GM10248 (cell line): ENCODE measurements at regions of chr12 and their contacts with region 1.

Region 1: DNA sequence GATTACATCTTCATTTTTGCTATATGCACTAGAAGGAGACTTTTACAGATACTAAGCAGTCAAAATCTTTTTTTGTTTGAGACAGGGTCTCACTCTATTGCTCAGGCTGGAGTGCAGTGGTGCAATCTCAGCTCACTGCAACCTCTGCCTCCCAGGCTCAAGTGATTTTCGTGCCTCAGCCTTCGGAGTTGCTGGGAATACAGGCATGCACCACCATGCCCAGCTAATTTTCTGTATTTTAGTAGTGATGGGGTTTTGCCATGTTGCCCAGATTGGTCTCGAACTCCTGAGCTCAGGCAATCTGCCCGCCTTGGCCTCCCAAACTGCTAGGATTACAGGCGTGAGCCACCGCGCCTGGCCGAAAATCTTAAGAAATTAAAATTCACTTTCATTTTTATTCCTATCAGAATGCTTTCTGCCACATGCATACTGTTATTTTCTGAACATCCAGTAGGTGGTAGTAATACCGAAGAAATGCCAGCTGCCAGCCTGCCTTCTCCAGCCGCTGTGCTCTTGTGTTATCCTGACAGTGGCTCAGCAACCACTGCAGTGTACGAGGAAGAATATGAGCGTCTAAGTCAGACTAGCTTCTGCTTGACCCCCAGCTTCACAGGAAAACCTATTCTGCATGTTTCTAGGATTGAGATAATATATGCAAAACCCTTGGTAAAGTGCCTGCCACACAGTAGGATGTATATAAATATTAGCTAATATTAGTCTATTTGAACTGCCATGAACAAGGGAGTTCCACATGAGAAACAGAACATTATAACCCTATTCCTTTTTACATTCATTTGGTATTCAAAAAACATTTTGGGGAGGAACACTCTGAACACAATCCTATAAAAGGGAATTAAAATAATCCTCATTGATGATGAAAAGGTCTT is 54.2 kb downstream of the RPAP3 start:
- DNase-seq: peak; percentile 34
- CTCF ChIP-seq: peak; percentile 56

Region 2: GRCh38 chr12:47636908-47637780 is 14.5 kb before region 1 on chr12:
- CTCF ChIA-PET with region 1: interaction called, 23 read pairs
- POLR2A ChIA-PET with region 1: no interaction called
- DNase-seq: no peak
- CTCF ChIP-seq: peak; percentile 37

Region 3: GRCh38 chr12:47672068-47672467 is 20.5 kb after region 1 on chr12:
- CTCF ChIA-PET with region 1: interaction called, 10 read pairs
- POLR2A ChIA-PET with region 1: no interaction called
- DNase-seq: no peak
- CTCF ChIP-seq: no peak

Region 4: DNA sequence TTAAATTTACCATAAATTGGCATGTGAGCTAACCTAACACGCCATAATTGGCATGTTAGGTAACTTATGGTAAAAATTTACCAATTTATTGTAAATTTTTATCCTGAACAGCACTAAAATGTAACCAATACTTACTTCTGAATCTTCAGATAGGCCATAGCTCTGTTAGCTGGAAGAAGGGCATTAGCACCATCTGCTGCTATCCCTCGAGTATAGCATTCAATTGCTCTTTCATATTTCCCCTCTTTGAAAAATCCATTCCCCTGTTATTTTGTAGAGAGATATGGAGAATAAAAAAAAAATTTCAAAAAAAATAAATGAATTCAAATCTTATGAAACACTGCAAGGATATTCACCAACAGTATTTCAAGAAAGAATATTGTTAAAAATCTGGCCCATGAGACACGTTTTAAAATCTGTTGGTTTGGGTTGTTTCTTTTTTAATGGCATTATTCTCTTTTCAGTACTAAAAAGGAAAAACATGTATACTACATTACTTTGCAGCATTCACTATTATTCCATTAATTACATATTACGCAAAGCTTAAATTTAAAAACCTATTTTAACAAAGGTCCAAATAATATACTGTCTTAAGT is 35.1 kb after region 1 on chr12:
- CTCF ChIA-PET with region 1: interaction called, 15 read pairs
- POLR2A ChIA-PET with region 1: no interaction called
- DNase-seq: peak; percentile 38
- CTCF ChIP-seq: peak; percentile 55